ENCODE measurements at regions of chr12 and their contacts with region 1.

Region 1: DNA sequence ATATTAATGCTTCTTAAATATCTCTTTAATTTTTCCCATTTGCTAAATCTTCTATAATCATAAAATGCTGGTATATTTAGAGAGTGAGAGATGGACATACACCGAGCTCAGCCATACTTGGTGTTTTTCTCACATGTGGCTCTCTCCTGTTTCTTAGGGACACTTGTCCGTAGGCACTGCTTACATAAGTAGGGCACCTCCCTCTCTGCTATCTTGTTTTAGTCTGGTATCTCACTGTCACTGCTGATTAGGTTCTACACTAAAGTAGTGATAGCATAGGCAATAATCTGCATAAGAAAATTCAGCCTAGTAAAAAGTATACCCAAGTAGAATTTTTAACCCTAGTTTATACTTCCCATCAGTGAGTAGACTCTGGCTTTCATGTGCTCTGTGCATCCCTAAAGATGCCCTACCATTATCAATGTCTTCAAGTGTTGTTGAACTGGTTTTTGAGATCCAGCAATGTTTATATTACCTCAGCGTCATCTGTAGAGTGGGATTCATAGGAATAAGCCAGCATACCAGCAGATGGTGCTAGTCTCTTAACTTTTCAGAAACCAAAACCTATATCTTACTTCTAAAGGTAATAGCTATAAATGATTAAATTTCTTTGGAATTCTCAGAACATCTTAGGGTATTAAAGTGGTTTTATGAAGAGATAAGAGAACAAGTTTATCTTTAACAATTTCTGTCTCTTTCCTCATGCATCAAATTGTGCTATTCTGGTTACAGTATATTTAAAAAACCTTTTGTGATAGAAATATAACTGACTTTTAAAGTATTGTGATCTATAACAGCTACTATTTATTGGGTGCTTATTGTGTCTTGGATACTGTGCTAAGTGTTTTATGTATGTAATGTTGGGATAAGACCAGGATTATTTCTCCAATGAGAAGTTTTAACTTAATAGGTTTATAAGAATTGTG is 32.9 kb downstream of the ARID2 start:
- DNase-seq: peak; percentile 19
- ATAC-seq: peak; percentile 75
- H3K4me3 ChIP-seq: no peak overlapping the region
- H3K27ac ChIP-seq: no peak overlapping the region
- H3K4me1 ChIP-seq: no peaks in the 10 kb centered on the region; a peak in 1 of 4 replicates
- H3K27me3 ChIP-seq: no peaks in the 10 kb centered on the region
- CTCF ChIP-seq: peak in 2 of 3 experiments; percentile 66 to 74; a peak in 4 of 6 replicates
- POLR2A ChIP-seq: no peak
- RAD21 ChIP-seq: peak; percentile 56

Region 2: DNA sequence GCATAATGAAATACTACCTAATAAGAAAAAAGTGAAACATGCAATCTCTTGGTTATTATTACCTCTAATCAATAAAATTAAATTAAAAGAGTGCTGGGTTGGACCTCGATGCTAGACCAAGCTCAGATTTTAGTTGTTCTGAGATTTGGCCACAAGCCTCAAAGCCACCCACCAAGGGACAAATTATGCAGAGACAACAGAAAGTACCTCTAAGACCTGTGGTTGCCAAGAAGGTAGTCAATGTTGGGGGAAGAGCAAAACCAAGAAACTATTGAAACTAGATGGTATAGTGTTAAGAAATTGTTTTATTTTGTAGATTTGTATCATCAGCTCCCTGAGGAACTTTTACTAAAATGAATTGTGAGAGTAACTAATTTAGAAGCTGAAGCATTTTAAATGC is 76.8 kb before region 1 on chr12:
- CTCF ChIA-PET with region 1: no interaction called
- POLR2A ChIA-PET with region 1: no interaction called
- RAD21 ChIA-PET with region 1: no interaction called
- intact Hi-C with region 1: no loop called
- DNase-seq: no peak
- ATAC-seq: no peak
- H3K4me3 ChIP-seq: no peak overlapping the region
- H3K27ac ChIP-seq: no peak overlapping the region
- H3K4me1 ChIP-seq: no peaks in the 10 kb centered on the region
- H3K27me3 ChIP-seq: no peaks in the 10 kb centered on the region
- CTCF ChIP-seq: no peak
- POLR2A ChIP-seq: no peak
- RAD21 ChIP-seq: no peak

Region 3: GRCh38 chr12:45773747-45774146 is 11.3 kb after region 1 on chr12:
- CTCF ChIA-PET with region 1: interaction called, 18 read pairs
- POLR2A ChIA-PET with region 1: no interaction called
- RAD21 ChIA-PET with region 1: no interaction called
- intact Hi-C with region 1: no loop called
- DNase-seq: no peak
- ATAC-seq: no peak
- H3K4me3 ChIP-seq: no peak overlapping the region
- H3K27ac ChIP-seq: no peak overlapping the region
- H3K4me1 ChIP-seq: no peaks in the 10 kb centered on the region
- H3K27me3 ChIP-seq: no peaks in the 10 kb centered on the region
- CTCF ChIP-seq: no peak
- POLR2A ChIP-seq: no peak
- RAD21 ChIP-seq: no peak

Region 4: DNA sequence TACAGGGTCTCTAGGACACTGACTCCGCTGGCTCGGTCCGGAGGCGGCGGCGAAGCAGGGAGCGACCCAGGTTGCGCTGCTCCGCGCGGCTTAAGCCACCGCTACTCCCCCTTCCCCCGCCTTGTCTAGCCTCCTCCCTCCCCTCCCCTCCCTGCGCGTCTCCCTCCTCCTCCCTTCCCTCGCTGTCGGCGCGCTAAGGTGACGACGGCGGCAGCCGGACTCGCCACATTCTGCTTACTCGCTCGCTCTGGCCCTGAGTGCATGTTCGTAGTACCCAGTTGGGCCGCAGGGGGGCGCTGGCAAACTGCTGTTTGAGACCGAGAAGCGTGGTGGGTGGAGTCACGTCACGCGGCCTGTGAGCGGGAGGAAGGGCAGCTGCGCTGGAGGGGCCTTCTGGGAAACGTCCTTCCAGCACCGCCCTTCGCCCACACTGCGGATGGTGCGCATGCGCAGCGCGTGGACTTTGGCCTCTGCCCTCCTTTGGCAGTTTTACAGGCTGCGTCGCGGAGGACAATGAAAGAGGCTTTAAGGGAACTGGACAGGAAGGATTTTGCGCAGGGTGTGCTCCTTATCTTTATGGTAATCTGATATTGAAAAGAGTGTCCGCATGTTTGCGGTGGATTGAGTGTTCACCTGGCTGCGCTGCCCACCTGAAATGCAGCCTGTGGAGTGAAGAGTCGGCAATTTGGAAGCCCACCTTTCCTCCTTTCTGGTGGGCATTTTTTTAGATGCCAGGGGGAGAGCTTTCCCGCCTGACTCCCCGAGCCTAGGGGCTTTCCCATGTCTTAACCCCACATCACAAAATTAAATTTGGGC is 228.2 kb after region 1 on chr12 and contains the start of gene SCAF11:
- CTCF ChIA-PET with region 1: no interaction called
- POLR2A ChIA-PET with region 1: no interaction called
- RAD21 ChIA-PET with region 1: no interaction called
- intact Hi-C with region 1: loop called (anchors 10 kb)
- DNase-seq: peak; percentile 100
- ATAC-seq: peak; percentile 84
- H3K4me3 ChIP-seq: peak within 1 kb of the TSS; percentile 85 to 89
- H3K27ac ChIP-seq: peak within 1 kb of the TSS; percentile 98
- H3K4me1 ChIP-seq: peaks cover 13 to 22% of the 10 kb centered on the region in 2 experiments
- H3K27me3 ChIP-seq: no peaks in the 10 kb centered on the region
- CTCF ChIP-seq: peak; percentile 81 to 92 (median 91); a peak in 5 of 6 replicates
- POLR2A ChIP-seq: peak; percentile 74
- RAD21 ChIP-seq: peak; percentile 98
- total RNA-seq, gene SCAF11: 79.8 TPM

Measured in HCT116 (cell line).